ENCODE measurements at regions of chr15 and their contacts with region 1.

Region 1: GRCh38 chr15:74635228-74635627 is 19.6 kb downstream of the CLK3 start:
- DNase-seq: no peak
- H3K4me3 ChIP-seq: no peak overlapping the region
- CTCF ChIP-seq: peak; percentile 88

Region 2: DNA sequence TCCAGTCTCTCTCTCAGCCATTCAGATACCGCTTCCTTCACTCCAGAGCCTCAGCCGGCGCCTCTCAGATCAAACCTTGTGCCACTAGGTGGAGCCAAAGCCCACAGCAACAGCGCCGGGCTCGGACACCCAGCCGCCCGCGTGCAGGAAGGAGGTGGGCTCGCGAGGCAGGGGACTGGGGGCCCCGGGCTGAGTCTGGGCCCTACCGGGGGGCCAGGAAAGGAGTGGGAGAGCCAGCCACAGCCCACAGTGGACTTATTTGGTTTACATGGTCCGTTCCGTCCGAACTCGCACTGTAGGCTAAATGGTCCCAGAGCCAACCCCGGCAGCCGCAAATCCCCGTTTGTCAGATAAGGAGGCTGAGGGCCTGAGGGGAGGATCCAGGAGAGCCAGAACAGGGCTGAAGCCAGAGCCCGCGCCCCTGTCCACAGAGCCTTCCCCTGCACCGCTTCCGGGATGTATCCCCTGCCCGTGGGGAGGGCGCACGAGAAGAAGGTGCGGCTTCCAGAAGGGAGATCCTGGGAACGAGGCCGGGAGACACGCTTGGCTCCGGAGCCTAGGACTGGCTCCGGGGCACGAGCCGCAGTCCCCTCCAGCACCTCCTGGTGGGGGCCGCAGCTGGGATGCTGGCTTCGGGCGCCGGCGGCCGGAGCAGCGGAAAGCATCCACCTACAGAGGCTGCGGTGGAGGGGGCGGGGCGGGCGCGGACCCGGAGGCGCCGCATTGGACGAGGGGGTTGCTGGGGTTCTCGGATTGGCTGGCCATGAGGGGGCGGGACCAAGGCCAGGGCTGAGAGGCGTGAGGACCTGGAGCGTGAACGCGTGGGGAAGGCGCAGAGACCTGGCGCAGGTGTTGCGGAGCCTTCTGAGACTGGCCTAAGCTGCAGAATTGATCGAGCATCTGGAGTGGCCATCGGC is 261.2 kb before region 1 on chr15:
- in situ Hi-C with region 1: loop called (anchors 10 kb)
- DNase-seq: peak; percentile 53
- H3K4me3 ChIP-seq: peak overlapping the region; percentile 69
- CTCF ChIP-seq: peak; percentile 88

Region 3: GRCh38 chr15:74584779-74585178 is 50.4 kb before region 1 on chr15:
- in situ Hi-C with region 1: no loop called
- DNase-seq: no peak
- H3K4me3 ChIP-seq: no peak overlapping the region
- CTCF ChIP-seq: no peak

Region 4: DNA sequence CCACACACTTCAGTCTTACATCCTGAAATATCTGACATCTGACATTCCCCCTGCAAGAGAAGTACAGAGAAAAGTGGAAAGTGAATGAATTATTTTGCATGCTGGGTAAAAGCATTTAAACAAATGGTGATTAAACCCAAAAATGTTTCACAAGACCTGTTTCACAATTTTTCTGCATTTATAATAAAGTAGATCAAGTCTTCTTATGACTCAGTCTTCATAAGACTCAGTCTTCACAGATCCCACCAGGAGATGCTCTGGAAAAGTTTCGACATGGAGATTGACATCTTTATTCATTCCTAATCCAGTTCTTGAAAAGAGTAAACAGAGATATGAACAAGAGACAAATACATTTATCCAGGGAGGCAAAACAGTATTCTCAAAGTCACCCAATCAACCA is 73.8 kb after region 1 on chr15:
- in situ Hi-C with region 1: loop called (anchors 5 kb)
- DNase-seq: no peak
- H3K4me3 ChIP-seq: no peak overlapping the region
- CTCF ChIP-seq: no peak

Region 5: GRCh38 chr15:74768771-74769342 is 133.6 kb after region 1 on chr15:
- in situ Hi-C with region 1: loop called (anchors 5 kb)
- DNase-seq: no peak
- H3K4me3 ChIP-seq: no peak overlapping the region
- CTCF ChIP-seq: peak; percentile 75